ENCODE measurements at regions of chr1 and their contacts with region 1.

Region 1: GRCh38 chr1:211469938-211470529 is 21.9 kb downstream of the RD3 start:
- DNase-seq: no peak
- H3K4me3 ChIP-seq: no peak overlapping the region
- CTCF ChIP-seq: peak; percentile 91

Region 2: GRCh38 chr1:211356723-211357407 is 113.2 kb before region 1 on chr1:
- CTCF ChIA-PET with region 1: interaction called, 10 read pairs
- POLR2A ChIA-PET with region 1: no interaction called
- DNase-seq: no peak
- H3K4me3 ChIP-seq: no peak overlapping the region
- CTCF ChIP-seq: no peak

Region 3: GRCh38 chr1:211415700-211416099 is 54.3 kb before region 1 on chr1:
- CTCF ChIA-PET with region 1: interaction called, 13 read pairs
- POLR2A ChIA-PET with region 1: no interaction called
- DNase-seq: no peak
- H3K4me3 ChIP-seq: peak overlapping the region; percentile 26
- CTCF ChIP-seq: no peak

Region 4: GRCh38 chr1:211484755-211485479 is 14.9 kb after region 1 on chr1:
- CTCF ChIA-PET with region 1: interaction called, 88 read pairs
- POLR2A ChIA-PET with region 1: no interaction called
- DNase-seq: no peak
- H3K4me3 ChIP-seq: no peak overlapping the region
- CTCF ChIP-seq: no peak

Region 5: DNA sequence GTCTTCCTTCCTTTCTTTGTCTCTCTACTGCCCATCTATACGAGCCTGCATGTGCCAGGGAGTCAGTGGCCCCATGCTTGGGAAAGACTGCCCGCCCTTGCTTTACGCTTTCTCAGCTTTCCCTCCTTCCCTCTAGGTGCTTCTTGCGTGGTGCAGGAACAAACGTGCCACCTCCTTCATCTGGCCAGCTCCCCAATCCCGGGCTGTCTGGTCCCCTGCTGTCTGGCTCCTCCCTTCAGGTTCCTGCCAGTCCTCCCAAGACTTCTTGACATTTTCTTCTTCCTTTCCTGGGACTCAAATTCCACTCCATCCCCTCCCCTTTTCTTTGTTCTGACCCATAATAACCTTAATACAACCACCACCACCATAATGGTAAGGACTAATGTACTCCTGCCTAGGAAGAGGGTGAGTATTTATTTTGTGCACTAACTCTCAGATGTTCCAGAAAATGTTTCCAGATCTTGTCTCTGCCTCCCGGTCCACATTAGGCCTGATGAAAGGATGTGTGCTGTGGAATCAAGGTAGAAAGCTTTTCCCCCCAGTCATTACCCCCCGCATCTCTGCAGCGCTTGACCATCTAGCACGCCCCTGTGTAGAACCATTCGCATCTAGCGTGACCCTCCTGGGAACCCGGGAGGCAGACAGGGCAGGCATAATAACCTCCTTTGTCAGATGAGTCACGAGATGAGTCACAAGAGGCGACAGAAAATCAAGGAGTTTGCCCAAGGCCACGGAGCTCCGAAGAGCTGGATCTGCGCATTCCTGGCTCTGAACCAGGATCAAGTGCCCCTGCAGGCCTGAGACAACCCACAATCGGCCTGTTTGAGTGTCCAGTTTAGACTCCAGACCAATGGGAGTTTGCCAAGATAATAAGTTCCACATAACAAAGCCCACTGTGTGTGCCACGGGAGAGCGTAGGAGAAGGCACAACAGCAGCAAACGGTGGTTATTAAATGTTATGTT is 265.5 kb after region 1 on chr1:
- CTCF ChIA-PET with region 1: no interaction called
- POLR2A ChIA-PET with region 1: no interaction called
- DNase-seq: peak; percentile 29
- H3K4me3 ChIP-seq: no peak overlapping the region
- CTCF ChIP-seq: no peak